HCT116 (cell line): ENCODE measurements at regions of chr7 and their contacts with region 1.

Region 1: GRCh38 chr7:48299580-48300169 is 128.4 kb downstream of the ABCA13 start:
- DNase-seq: peak; percentile 28
- ATAC-seq: peak; percentile 84
- H3K4me3 ChIP-seq: no peak overlapping the region
- H3K27ac ChIP-seq: no peak overlapping the region
- H3K4me1 ChIP-seq: no peaks in the 10 kb centered on the region
- H3K27me3 ChIP-seq: no peaks in the 10 kb centered on the region
- CTCF ChIP-seq: peak; percentile 38 to 81 (median 73); a peak in 5 of 6 replicates
- POLR2A ChIP-seq: no peak
- RAD21 ChIP-seq: peak; percentile 68

Region 2: DNA sequence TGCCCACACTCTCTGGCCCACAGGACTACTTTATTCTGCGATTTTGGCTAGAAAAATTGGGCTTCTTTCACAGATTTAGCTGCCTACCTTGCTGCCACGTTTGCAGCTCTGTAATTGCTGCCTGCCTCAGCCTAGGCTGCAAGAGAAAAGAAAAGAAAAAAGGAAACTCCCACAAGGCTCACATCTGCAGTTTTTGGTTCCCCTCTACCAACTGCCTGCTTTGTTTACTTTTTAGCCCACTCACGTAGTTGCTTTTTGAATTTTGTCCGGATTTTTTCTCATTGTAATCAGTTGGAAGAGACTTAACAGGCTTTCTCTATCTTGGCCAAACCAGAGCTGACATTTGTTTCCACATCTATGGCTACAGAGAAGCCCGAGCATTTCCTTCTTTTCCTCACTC is 295.0 kb before region 1 on chr7:
- CTCF ChIA-PET with region 1: no interaction called
- POLR2A ChIA-PET with region 1: no interaction called
- RAD21 ChIA-PET with region 1: no interaction called
- intact Hi-C with region 1: no loop called
- DNase-seq: no peak
- ATAC-seq: no peak
- H3K4me3 ChIP-seq: no peak overlapping the region
- H3K27ac ChIP-seq: no peak overlapping the region
- H3K4me1 ChIP-seq: peaks cover 0 to 14% of the 10 kb centered on the region in 2 experiments; a peak in 3 of 4 replicates
- H3K27me3 ChIP-seq: no peaks in the 10 kb centered on the region
- CTCF ChIP-seq: no peak
- POLR2A ChIP-seq: no peak
- RAD21 ChIP-seq: no peak

Region 3: DNA sequence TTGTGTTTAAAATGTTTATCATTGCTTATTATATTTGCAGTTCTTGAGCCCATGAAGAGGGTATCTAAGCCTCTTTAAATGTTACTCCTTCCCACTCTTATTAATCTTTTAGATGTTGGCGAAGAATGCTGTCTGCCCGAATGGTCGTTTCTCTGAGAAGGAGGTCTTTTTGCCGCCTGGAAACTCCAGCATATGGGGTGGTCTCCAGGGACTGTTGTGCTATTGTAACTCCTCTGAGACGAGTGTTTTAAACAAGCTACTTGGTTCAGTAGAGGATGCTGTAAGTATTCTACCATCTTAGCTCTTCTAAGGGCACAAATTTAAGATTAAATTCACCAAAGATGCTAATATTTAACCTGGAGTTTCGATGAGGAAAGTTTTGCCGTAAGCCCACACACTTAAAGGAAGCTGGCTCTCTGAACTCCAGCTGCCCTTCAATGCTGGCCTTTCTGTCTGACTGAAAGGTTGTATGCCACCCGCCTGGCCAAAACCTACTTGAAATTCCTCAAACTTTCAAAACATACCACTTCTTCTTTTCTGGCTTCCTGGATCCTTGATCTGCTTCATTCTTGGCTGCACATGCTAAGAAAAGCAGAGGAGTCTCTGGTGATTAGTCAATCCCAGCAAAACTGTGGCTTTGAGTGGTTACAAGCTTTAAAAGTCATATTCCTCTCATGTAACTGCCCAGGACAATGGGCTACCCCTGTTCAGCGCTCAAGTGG is 53.8 kb before region 1 on chr7:
- CTCF ChIA-PET with region 1: no interaction called
- POLR2A ChIA-PET with region 1: no interaction called
- RAD21 ChIA-PET with region 1: no interaction called
- intact Hi-C with region 1: loop called (anchors 5 kb)
- DNase-seq: no peak
- ATAC-seq: no peak
- H3K4me3 ChIP-seq: no peak overlapping the region
- H3K27ac ChIP-seq: no peak overlapping the region
- H3K4me1 ChIP-seq: no peaks in the 10 kb centered on the region
- H3K27me3 ChIP-seq: peaks cover 25% of the 10 kb centered on the region
- CTCF ChIP-seq: no peak
- POLR2A ChIP-seq: no peak
- RAD21 ChIP-seq: no peak

Region 4: GRCh38 chr7:48667407-48667806 is 367.7 kb after region 1 on chr7:
- CTCF ChIA-PET with region 1: no interaction called
- POLR2A ChIA-PET with region 1: no interaction called
- RAD21 ChIA-PET with region 1: no interaction called
- intact Hi-C with region 1: no loop called
- DNase-seq: no peak
- ATAC-seq: no peak
- H3K4me3 ChIP-seq: no peak overlapping the region
- H3K27ac ChIP-seq: no peak overlapping the region
- H3K4me1 ChIP-seq: no peaks in the 10 kb centered on the region
- H3K27me3 ChIP-seq: no peaks in the 10 kb centered on the region
- CTCF ChIP-seq: no peak
- POLR2A ChIP-seq: no peak
- RAD21 ChIP-seq: no peak